ENCODE measurements at regions of chr1 and their contacts with region 1.

Region 1: DNA sequence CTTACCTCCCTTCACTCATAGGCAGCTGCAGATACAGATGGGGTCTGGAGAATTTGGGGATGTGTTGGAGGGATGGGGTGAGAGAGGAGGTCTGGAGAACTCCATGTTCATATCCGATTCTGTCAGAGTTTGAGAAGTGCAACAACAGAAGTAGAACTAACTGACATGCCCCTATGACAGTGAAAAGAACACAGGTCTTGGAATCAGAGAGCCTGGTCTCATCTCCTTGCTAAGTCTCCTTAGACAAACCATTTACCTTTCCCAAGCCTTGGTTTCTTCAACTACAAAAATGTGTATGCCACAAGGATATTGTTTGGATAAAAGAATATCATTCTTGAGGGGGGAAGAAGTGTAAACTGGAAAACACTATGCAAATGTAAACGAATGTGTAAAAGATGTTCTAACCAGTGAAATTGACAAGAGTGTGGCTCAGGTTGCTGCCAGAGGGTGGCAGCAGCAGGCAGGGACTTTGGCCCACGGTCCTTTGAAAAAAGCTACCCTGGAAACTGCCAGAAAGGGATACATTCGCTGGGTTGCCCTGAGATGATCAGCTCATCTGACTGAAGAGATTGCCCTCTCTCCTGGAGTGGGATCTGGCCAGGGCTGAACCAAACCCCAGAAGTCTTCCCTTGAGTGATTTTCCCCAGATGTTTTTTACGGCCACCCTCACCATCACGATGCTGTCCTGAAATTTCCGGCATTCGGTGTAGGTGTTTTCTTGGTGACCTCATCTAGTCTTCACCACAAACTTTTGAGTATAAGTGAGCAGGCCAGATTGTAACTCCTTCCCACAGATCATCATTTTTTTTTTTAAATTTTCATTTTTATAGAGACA is 17.0 kb upstream of the CD2 start:
- DNase-seq: peak; percentile 57
- ATAC-seq: peak; percentile 71 to 74

Region 2: GRCh38 chr1:117045644-117046043 is 308.4 kb after region 1 on chr1:
- intact Hi-C with region 1: loop called in 1 of 2 experiments (anchors 5 kb)
- DNase-seq: no peak
- ATAC-seq: no peak

Region 3: GRCh38 chr1:117051224-117052064 is 314.2 kb after region 1 on chr1:
- intact Hi-C with region 1: loop called (anchors 2 to 5 kb)
- DNase-seq: no peak
- ATAC-seq: peak; percentile 54 to 57

Measured in left cardiac atrium (tissue), 4 donors.